Activated CD8-positive, alpha-beta T cell treated with anti-CD3 and anti-CD28 coated beads, Interleukin-2, amount 10 ng/mL, durations not matched to agents 7 days and 5 days (primary cell): ENCODE measurements at regions of chr14 and their contacts with region 1.

Region 1: DNA sequence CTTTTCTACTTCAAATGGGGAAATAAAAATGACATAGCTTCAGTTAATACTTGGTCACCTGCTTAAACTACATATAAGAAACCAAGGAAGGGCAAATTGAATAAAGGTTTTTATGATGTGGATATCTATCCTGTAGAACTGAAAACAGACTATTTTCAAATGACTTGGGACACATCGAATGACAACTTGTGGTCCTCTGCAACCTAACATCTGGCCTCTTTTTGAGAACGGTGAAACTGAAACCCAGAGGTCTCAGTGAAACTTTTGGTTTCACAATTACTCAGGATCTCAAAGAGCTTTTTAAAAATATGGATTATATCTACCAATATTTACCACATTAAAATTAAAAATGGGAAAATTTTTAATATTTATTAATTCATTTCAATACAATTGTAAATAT is 65.2 kb downstream of the PPP2R5E start:
- DNase-seq: peak; percentile 69
- ATAC-seq: peak; percentile 91
- H3K4me3 Mint-ChIP-seq: peak overlapping the region; percentile 55
- H3K27ac Mint-ChIP-seq: peak overlapping the region; percentile 75
- H3K4me1 Mint-ChIP-seq: peaks cover 43% of the 10 kb centered on the region
- H3K27me3 Mint-ChIP-seq: no peaks in the 10 kb centered on the region

Region 2: DNA sequence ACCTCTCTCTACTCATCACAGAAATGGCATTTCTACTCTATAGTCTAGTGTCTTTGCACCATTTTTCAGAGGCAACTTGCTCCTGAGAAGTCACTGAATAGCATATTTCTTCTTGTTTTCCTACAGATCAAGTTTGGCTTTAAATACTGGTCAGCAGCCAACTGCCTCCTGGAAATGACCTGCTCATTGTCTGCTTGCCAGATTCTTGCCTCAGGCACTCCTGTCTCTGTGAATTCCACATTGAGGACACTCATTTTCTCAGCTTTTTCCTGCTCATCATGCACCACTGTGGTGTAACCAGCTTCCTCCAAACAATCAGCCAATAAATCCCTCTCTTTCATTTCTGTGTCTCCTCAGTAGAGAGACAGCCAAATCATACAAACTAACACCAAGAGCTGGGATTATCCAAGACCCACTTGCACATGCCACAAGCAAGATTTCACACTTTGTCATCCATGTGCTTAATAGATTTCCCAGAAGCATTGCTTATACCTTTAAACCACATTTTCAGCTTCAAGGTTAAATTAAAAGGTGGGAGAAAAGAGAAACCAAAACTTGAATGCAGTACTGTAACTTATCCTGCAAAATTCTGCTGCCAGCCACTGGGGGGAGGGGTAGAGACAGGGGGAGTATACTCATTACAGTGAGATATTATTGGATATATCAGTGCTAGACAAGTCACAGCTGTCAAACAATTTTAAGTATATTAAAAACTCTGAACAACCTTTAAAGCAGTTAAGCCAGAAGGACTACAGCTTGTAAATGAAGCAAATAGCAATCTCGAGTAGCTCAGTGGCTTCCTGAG is 39.9 kb before region 1 on chr14:
- CTCF ChIA-PET with region 1: interaction called, 10 read pairs
- POLR2A ChIA-PET with region 1: no interaction called
- DNase-seq: peak; percentile 61
- ATAC-seq: peak; percentile 77
- H3K4me3 Mint-ChIP-seq: peak overlapping the region; percentile 62
- H3K27ac Mint-ChIP-seq: peak overlapping the region; percentile 69
- H3K4me1 Mint-ChIP-seq: peaks cover 53% of the 10 kb centered on the region
- H3K27me3 Mint-ChIP-seq: no peaks in the 10 kb centered on the region